ENCODE measurements at regions of chr12 and their contacts with region 1.

Region 1: DNA sequence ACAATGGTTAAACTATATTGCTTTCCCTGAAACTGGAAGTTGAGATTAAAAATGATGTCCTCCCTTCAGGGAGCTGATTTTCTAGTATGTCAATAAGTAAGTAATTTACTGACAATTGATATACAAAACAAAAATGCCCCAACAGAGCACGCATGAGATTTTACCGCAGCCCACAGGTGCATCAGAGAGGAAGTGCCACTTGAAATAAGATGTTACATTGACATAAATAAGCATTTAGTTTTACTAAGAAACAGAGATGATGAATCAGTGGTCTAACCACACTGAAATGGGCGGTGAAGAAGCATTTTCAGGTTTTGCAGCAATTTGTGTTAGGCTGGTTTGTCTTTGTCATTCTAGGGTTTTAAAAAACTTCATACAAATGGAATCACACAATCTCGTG is 8.8 kb upstream of the CLECL1 start:
- DNase-seq: peak; percentile 89
- ATAC-seq: peak; percentile 82
- H3K4me3 ChIP-seq: peak overlapping the region; percentile 36; the same call in 1 of the 2 replicates
- H3K27ac ChIP-seq: peak overlapping the region; percentile 72
- H3K4me1 ChIP-seq: peaks cover 30% of the 10 kb centered on the region
- H3K27me3 ChIP-seq: no peaks in the 10 kb centered on the region
- CTCF ChIP-seq: no peak
- EP300 ChIP-seq: peak; percentile 96 to 97
- POLR2A ChIP-seq: no peak
- RAD21 ChIP-seq: no peak

Region 2: GRCh38 chr12:9721394-9722092 is 20.2 kb before region 1 on chr12:
- CTCF ChIA-PET with region 1: interaction called, 14 read pairs
- POLR2A ChIA-PET with region 1: interaction called, 3 read pairs
- RAD21 ChIA-PET with region 1: interaction called, 18 read pairs
- SMC1A ChIA-PET with region 1: interaction called, 11 read pairs
- in situ Hi-C with region 1: no loop called
- intact Hi-C with region 1: no loop called
- DNase-seq: peak; percentile 77
- ATAC-seq: peak; percentile 71
- H3K4me3 ChIP-seq: 0 out of 2 replicates have a peak overlapping the region, but pooled peaks have one; percentile 3
- H3K27ac ChIP-seq: peak overlapping the region; percentile 88
- H3K4me1 ChIP-seq: peaks cover 51% of the 10 kb centered on the region
- H3K27me3 ChIP-seq: no peaks in the 10 kb centered on the region; a peak in 1 of 4 replicates
- CTCF ChIP-seq: no peak
- EP300 ChIP-seq: peak; percentile 29 to 58; a peak in 2 of 4 replicates
- POLR2A ChIP-seq: peak; percentile 41; the same call in 1 of the 2 replicates
- RAD21 ChIP-seq: 0 out of 2 replicates have a peak, but pooled peaks have one; percentile 1

Region 3: DNA sequence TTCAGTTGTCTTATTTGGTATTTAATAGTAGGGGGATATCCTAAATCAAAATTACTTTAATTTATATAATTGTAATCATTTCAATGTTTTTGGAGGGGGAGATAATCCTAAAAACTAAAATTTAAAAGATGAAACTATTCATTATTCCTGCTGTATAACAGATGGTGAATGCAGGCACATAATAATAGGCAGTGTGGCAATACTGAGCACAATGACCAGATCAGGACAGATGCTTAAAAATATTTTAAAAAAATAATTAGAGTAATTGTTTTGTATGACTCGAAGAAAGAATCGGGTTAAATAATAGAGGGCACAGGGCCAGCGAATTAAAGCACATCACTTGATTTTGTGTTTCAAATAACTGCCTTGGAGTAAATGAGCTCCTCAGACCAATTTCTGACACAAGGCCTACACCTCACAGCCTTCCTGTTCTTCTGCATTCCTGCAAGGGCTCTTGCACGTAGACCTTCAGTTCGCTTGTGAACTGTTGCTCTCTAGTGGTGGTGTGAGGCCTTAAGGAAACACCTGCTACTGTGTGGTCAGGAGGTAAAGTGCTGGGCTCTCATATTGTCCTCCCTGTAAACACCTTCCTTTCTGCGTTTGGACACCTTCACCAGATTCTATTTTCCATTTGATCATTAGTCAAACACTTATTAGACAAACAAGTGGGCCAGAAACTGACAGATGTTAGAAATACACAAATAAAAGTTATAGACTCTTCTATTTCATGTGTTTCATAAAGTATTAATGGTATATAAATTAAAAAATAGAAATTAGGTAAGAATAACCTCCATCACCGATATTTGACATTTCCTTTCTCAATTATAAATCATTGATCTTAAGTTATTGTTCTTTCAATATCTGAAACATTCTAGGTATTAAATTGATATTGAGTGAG is 56.2 kb after region 1 on chr12:
- CTCF ChIA-PET with region 1: interaction called, 835 read pairs
- POLR2A ChIA-PET with region 1: no interaction called
- RAD21 ChIA-PET with region 1: interaction called, 577 read pairs
- SMC1A ChIA-PET with region 1: interaction called, 814 read pairs
- in situ Hi-C with region 1: no loop called
- intact Hi-C with region 1: no loop called
- DNase-seq: peak; percentile 85
- ATAC-seq: peak; percentile 100
- H3K4me3 ChIP-seq: no peak overlapping the region
- H3K27ac ChIP-seq: no peak overlapping the region
- H3K4me1 ChIP-seq: peaks cover 10% of the 10 kb centered on the region; the same call in 1 of the 2 replicates
- H3K27me3 ChIP-seq: no peaks in the 10 kb centered on the region
- CTCF ChIP-seq: peak; percentile 80 to 87 (median 83)
- EP300 ChIP-seq: no peak
- POLR2A ChIP-seq: no peak
- RAD21 ChIP-seq: peak; percentile 100

Region 4: GRCh38 chr12:9813821-9814809 is 72.4 kb after region 1 on chr12:
- CTCF ChIA-PET with region 1: interaction called, 73 read pairs
- POLR2A ChIA-PET with region 1: no interaction called
- RAD21 ChIA-PET with region 1: interaction called, 3 read pairs
- SMC1A ChIA-PET with region 1: interaction called, 4 read pairs
- in situ Hi-C with region 1: no loop called
- intact Hi-C with region 1: no loop called
- DNase-seq: peak; percentile 23
- ATAC-seq: peak; percentile 100
- H3K4me3 ChIP-seq: peak overlapping the region; percentile 58; the same call in 1 of the 2 replicates
- H3K27ac ChIP-seq: no peak overlapping the region
- H3K4me1 ChIP-seq: no peaks in the 10 kb centered on the region
- H3K27me3 ChIP-seq: no peaks in the 10 kb centered on the region; a peak in 2 of 4 replicates
- CTCF ChIP-seq: peak; percentile 93 to 97 (median 93)
- EP300 ChIP-seq: no peak
- POLR2A ChIP-seq: no peak
- RAD21 ChIP-seq: peak; percentile 92

Region 5: GRCh38 chr12:9883175-9883574 is 141.4 kb after region 1 on chr12:
- CTCF ChIA-PET with region 1: no interaction called
- POLR2A ChIA-PET with region 1: no interaction called
- RAD21 ChIA-PET with region 1: no interaction called
- SMC1A ChIA-PET with region 1: no interaction called
- in situ Hi-C with region 1: no loop called
- intact Hi-C with region 1: no loop called
- DNase-seq: no peak
- ATAC-seq: no peak
- H3K4me3 ChIP-seq: no peak overlapping the region
- H3K27ac ChIP-seq: no peak overlapping the region
- H3K4me1 ChIP-seq: no peaks in the 10 kb centered on the region
- H3K27me3 ChIP-seq: no peaks in the 10 kb centered on the region
- CTCF ChIP-seq: no peak
- EP300 ChIP-seq: no peak
- POLR2A ChIP-seq: no peak
- RAD21 ChIP-seq: no peak

Region 6: GRCh38 chr12:10001171-10001776 is 259.5 kb after region 1 on chr12:
- CTCF ChIA-PET with region 1: no interaction called
- POLR2A ChIA-PET with region 1: no interaction called
- RAD21 ChIA-PET with region 1: no interaction called
- SMC1A ChIA-PET with region 1: no interaction called
- in situ Hi-C with region 1: no loop called
- intact Hi-C with region 1: no loop called
- DNase-seq: no peak
- ATAC-seq: no peak
- H3K4me3 ChIP-seq: no peak overlapping the region
- H3K27ac ChIP-seq: no peak overlapping the region
- H3K4me1 ChIP-seq: no peaks in the 10 kb centered on the region
- H3K27me3 ChIP-seq: peaks cover 0 to 2% of the 10 kb centered on the region in 2 experiments; a peak in 2 of 4 replicates
- CTCF ChIP-seq: no peak
- EP300 ChIP-seq: no peak
- POLR2A ChIP-seq: no peak
- RAD21 ChIP-seq: no peak

Region 7: GRCh38 chr12:10016881-10017280 is 275.2 kb after region 1 on chr12:
- CTCF ChIA-PET with region 1: no interaction called
- POLR2A ChIA-PET with region 1: no interaction called
- RAD21 ChIA-PET with region 1: no interaction called
- SMC1A ChIA-PET with region 1: no interaction called
- in situ Hi-C with region 1: no loop called
- intact Hi-C with region 1: loop called (anchors 10 kb)
- DNase-seq: no peak
- ATAC-seq: no peak
- H3K4me3 ChIP-seq: no peak overlapping the region
- H3K27ac ChIP-seq: no peak overlapping the region
- H3K4me1 ChIP-seq: no peaks in the 10 kb centered on the region
- H3K27me3 ChIP-seq: peaks cover 0 to 4% of the 10 kb centered on the region in 2 experiments; a peak in 1 of 4 replicates
- CTCF ChIP-seq: no peak
- EP300 ChIP-seq: no peak
- POLR2A ChIP-seq: no peak
- RAD21 ChIP-seq: no peak